Dorsolateral prefrontal cortex (tissue), 120 donors: ENCODE measurements at regions of chr12 and their contacts with region 1.

Region 1: DNA sequence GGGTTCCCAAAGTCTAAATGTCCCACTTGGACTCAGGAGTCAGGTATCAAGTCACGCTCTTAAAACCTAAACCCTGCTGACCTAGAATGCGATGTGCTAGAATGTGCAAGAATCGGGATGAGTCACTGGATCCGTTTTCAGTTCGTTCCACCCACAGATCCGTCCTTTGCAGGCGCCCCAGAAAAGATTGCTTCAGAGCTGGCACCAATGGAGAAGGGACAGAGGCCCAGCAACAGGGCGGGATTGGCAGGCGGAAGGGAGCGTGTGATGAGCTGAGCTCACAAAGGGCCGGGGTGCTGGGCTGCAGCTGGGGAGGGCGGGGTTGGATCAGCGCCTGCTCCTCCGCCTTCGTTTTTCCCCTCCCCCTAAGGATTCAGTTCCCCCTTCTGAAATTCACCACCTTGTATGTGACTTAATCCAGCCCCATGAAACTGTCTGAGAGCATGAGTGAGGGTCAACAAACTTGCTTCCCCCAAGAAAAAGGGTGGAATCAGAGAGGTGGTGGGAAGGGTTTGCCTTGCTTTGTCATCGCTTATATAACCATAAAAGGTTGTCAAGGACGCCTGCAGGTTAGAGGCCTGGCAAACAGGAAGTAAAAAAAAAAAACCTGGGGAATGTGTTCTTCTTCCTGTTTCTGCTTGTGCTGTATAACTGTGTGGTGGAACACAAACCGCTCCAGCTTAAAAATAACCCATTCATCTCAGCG is 2.8 kb upstream of the UBC start:
- DNase-seq: peak; percentile 92 to 99 (median 97)
- H3K4me3 ChIP-seq: peak overlapping the region in 58 of 59 donors; percentile 2 to 99 (median 90)
- H3K27ac ChIP-seq: peak overlapping the region; percentile 97 to 100 (median 100)
- H3K27me3 ChIP-seq: no peaks in the 10 kb centered on the region
- CTCF ChIP-seq: peak in 5 of 56 donors; percentile 9 to 28 (median 10)

Region 2: GRCh38 chr12:124940549-124941527 is 23.6 kb after region 1 on chr12:
- intact Hi-C with region 1: loop called in 1 of 2 experiments (anchors 1 kb)
- DNase-seq: peak; percentile 71 to 93 (median 88)
- H3K4me3 ChIP-seq: peak overlapping the region; percentile 29 to 76 (median 61)
- H3K27ac ChIP-seq: peak overlapping the region; percentile 91 to 100 (median 99)
- H3K27me3 ChIP-seq: no peaks in the 10 kb centered on the region
- CTCF ChIP-seq: peak; percentile 67 to 97 (median 91)

Region 3: DNA sequence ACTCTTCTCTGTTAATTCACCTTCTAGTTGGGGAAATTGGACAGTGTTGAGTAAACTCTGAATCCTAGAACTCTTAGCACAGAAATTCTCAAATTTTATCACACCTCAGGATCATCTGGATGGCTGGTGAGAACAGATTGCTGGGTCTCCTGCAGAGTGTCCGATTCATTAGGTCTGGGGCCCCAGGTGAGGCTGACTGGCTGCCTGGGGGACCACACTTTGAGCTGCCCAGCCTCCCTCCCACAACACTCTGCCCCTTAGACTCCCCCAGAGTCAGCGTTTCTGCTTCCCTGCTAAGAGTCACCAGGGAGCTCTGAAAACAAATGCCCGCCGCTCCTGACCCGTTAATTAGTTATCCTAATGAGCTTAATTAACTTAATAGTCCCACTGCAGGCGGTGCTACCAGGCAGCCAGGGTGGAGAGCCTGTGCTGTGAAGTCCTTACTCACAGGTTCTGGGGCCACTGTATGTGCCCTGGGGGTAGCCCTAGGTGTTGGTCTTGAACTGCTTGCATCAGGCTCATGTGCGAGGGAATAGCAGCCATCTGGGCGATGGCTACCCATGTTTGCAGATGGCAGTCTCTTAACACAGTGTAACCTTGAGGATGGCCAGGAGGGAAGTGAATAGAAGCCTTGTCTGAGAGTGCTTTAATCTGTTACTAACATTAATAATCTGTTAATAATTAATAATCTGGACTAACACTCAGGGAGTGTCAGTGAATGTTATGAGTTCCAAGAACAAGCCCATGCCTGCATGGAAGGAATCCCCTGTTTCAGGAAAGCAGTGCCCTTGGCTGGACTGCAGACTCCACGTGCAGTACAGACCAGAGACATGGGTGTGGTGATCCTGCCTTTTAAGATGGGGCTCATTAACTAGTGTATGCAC is 183.5 kb after region 1 on chr12:
- intact Hi-C with region 1: no loop called
- DNase-seq: no peak
- H3K4me3 ChIP-seq: no peak overlapping the region
- H3K27ac ChIP-seq: no peak overlapping the region
- H3K27me3 ChIP-seq: no peaks in the 10 kb centered on the region
- CTCF ChIP-seq: no peak